Right ventricle myocardium inferior (tissue), 1 donor: ENCODE measurements at regions of chr9 and their contacts with region 1.

Region 1: DNA sequence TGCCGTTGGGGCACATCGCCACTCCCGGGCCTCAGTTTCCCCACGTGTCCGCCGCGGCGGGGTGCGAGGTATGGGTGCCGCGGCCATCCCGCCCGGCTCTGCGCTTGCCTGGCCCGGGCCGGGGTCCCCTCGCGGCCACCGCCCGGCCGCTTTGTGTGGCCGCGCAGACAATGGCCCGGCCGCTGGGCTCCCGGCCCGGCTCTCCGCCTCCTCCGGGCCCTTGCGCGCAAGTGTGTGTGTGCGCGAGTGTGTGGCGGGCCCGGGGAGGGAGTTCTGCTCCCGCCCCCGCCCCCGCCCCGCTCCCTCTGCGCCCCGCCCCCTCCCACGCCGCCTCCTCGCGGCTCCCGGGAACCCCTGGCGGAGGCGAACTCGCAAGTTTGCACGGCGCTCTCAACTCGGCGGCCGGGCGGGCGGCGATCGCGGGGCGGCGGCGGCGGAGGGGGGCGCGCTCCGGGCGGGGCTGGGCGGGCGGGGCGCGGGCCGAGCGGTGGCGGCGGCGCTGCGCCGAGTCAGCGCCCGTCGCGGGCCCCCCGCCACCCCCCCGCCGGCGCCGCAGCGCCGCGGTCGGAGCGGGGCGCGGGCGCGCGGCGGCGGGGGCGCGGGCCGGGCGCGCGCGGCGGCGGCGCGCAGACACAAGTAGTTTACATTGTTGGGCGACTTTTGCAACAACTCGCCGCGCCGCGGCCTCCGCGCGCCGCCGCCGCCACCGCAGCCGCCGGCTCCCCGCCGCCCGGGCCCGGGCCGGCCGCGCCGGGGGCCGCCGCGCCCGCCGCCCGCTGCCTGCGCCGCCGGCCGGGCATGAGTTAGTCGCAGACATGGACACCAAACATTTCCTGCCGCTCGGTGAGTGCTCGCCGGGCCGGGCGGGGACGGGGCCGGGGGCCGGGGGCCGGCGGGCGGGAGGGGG is at the start of gene RXRA:
- DNase-seq: peak; percentile 93
- ATAC-seq: peak; percentile 72
- total RNA-seq, gene RXRA: 91.1 TPM

Region 2: GRCh38 chr9:134067904-134068743 is 257.9 kb before region 1 on chr9 and contains the start of gene BRD3:
- intact Hi-C with region 1: loop called (anchors 5 kb)
- DNase-seq: peak; percentile 95
- ATAC-seq: peak; percentile 97
- total RNA-seq, gene BRD3: 31.6 TPM

Region 3: GRCh38 chr9:134171316-134172197 is 154.5 kb before region 1 on chr9:
- intact Hi-C with region 1: loop called (anchors 5 kb)
- DNase-seq: no peak
- ATAC-seq: peak; percentile 35

Region 4: GRCh38 chr9:134283111-134283515 is 43.0 kb before region 1 on chr9:
- intact Hi-C with region 1: loop called (anchors 5 kb)
- DNase-seq: peak; percentile 72
- ATAC-seq: peak; percentile 63

Region 5: DNA sequence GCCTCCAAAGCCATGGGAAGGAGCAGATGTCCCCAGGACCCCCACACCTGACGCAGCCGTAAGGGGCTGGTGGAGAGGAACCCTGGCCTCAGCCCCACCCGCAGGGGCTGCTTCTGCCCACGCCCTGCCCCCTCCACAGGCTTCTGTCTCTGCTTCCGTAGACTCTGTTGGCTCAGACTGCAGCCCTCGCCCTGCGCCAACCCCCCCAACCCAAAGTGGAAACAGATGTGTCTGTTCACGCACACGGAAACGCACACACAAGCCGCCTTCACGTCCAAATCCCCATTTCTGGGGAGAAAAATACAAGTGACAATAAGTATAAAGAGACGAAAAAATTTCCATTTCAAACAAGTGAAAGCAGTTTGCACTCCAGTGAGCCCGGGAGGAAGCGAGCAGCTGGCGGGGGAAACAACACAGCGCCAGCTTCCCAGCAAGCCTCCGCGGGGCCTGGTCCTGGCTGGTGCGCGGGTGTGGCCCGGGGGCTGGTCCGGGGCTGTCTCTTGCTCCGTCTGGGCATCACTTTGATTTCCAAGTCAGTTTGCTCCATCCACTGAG is 32.4 kb before region 1 on chr9:
- intact Hi-C with region 1: no loop called
- DNase-seq: peak; percentile 70
- ATAC-seq: peak; percentile 47

Region 6: GRCh38 chr9:134378901-134379338 is 52.9 kb after region 1 on chr9:
- intact Hi-C with region 1: loop called (anchors 10 kb)
- DNase-seq: no peak
- ATAC-seq: peak; percentile 31

Region 7: DNA sequence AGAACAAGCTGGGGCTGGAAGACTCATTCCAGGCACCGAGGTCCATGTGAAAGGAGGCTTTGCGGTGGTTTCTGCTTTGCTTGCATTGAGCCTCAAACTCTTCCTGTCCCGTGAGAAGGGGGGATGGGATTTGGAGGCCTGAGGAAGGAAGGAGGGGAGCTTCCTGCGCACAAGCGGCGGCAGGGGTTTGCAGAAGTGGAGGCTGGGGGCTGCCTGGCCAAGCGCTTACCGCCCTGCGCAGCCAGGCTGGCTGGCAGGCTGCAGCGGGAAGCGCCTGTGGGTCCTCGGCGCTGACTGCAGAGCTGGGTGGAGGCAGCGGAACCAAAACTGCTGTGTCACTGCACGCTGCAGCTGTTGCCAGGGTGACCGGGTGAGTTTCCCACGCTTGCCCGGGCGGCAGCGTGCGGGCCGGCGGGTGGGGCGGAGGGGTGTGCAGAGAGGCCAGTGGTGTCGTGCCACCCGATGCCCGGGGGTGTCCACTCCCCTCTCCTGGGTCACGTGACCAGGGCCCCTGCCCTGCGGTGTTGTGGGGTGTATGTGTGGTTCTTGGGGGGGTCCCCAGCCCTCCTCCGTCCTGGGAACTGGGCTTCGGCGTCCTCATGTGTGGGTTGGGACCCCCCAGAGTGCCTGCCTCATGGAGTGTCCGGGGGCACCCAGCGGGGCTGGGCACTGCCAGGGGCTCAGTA is 81.2 kb after region 1 on chr9:
- intact Hi-C with region 1: loop called (anchors 5 kb)
- DNase-seq: peak; percentile 97
- ATAC-seq: peak; percentile 74

Region 8: GRCh38 chr9:134434894-134435506 is 108.9 kb after region 1 on chr9:
- intact Hi-C with region 1: loop called (anchors 2 kb)
- DNase-seq: peak; percentile 97
- ATAC-seq: peak; percentile 86